GM13976 (cell line): ENCODE measurements at regions of chr10 and their contacts with region 1.

Region 1: GRCh38 chr10:62594093-62594520 is 210.4 kb upstream of the ADO start:
- DNase-seq: peak; percentile 54
- CTCF ChIP-seq: peak; percentile 95

Region 2: DNA sequence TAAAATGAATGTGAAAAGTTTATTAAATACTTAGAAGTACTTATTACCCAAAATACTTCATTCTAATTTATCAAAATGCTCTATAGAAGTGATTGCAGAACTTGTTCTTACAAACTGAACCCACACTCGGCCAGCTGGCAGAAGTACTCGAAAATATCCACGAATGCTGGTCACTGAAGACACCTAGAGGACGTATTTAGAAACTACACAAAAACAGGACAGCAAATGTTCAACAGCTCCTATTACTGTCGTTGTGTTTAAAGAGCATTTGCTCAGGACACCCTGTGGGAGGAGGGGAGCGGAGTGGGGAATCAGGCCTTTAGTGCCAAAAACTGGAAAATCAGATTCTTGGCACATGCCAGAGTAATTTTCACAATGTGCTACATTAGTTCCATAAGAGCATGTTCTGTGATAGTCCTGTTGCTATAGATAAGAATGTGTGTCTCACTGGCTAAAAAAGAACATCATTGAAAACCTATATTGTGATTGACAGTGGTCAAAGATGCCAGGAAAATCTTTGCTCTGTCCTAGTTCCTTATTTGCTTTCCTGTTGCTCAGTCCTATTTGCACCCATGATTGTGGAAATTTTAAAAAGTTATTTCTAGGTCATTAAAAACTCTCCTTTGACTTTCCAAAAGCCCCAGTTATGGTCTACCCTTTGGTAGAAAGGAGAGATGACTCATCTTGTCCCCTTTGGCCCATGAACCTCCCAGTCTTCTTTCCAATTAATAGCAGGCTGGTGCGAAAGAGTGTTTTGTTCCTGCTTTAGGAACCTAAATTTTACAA is 490.0 kb after region 1 on chr10:
- in situ Hi-C with region 1: loop called (anchors 25 kb)
- DNase-seq: peak; percentile 68
- CTCF ChIP-seq: peak; percentile 64